CD8-positive, alpha-beta memory T cell (primary cell): ENCODE measurements at regions of chr20 and their contacts with region 1.

Region 1: GRCh38 chr20:2713285-2713684 is 20.7 kb downstream of the EBF4 start:
- DNase-seq: peak in 2 of 5 donors; percentile 42 to 52
- H3K4me3 ChIP-seq: no peak overlapping the region
- H3K4me3 Mint-ChIP-seq: no peak overlapping the region
- H3K27ac ChIP-seq: no peak overlapping the region
- H3K27ac Mint-ChIP-seq: no peak overlapping the region
- H3K4me1 ChIP-seq: peaks cover 5% of the 10 kb centered on the region
- H3K4me1 Mint-ChIP-seq: peaks cover 0 to 2% (median 0%) of the 10 kb centered on the region in 3 donors
- H3K27me3 ChIP-seq: no peaks in the 10 kb centered on the region
- H3K27me3 Mint-ChIP-seq: peaks cover 4 to 8% of the 10 kb centered on the region in 2 donors

Region 2: DNA sequence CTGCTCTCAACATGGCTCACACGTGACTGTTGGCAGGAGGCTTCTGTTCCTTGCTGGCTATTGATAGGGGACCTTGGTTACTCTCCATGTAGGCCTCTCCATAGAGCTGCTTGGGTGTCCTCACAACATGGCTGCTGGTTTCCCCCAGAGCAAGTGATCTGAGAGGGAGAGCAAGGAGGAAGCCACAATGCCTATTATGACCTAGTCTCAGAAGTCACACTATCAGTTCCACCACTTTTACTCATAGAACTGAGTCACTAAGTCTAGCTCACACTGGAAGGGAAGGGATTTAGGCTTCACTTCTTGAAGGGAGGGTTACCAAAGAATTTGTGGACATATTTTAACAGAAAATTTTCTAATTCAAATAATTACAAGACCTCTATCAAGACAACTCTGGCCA is 69.6 kb before region 1 on chr20:
- CTCF ChIA-PET with region 1: no interaction called
- POLR2A ChIA-PET with region 1: no interaction called
- DNase-seq: no peak
- H3K4me3 ChIP-seq: no peak overlapping the region
- H3K4me3 Mint-ChIP-seq: no peak overlapping the region
- H3K27ac ChIP-seq: no peak overlapping the region
- H3K27ac Mint-ChIP-seq: no peak overlapping the region
- H3K4me1 ChIP-seq: peaks cover 3% of the 10 kb centered on the region
- H3K4me1 Mint-ChIP-seq: peaks cover 5 to 11% (median 6%) of the 10 kb centered on the region in 3 donors
- H3K27me3 ChIP-seq: no peaks in the 10 kb centered on the region
- H3K27me3 Mint-ChIP-seq: no peaks in the 10 kb centered on the region

Region 3: GRCh38 chr20:2729251-2729713 is 16.0 kb after region 1 on chr20:
- CTCF ChIA-PET with region 1: interaction called, 40 read pairs
- POLR2A ChIA-PET with region 1: interaction called, 5 read pairs
- DNase-seq: peak in 3 of 5 donors; percentile 54 to 71 (median 64)
- H3K4me3 ChIP-seq: peak overlapping the region; percentile 4
- H3K4me3 Mint-ChIP-seq: peak overlapping the region in 6 of 7 donors; percentile 51 to 71 (median 65)
- H3K27ac ChIP-seq: no peak overlapping the region
- H3K27ac Mint-ChIP-seq: peak overlapping the region; percentile 16 to 96 (median 90)
- H3K4me1 ChIP-seq: peaks cover 28% of the 10 kb centered on the region
- H3K4me1 Mint-ChIP-seq: peaks cover 21 to 28% (median 28%) of the 10 kb centered on the region in 3 donors
- H3K27me3 ChIP-seq: no peaks in the 10 kb centered on the region
- H3K27me3 Mint-ChIP-seq: peaks cover 3 to 13% of the 10 kb centered on the region in 2 donors

Region 4: GRCh38 chr20:2742934-2743559 is 29.8 kb after region 1 on chr20:
- CTCF ChIA-PET with region 1: interaction called, 154 read pairs
- POLR2A ChIA-PET with region 1: interaction called, 5 read pairs
- DNase-seq: peak; percentile 56 to 81 (median 68)
- H3K4me3 ChIP-seq: no peak overlapping the region
- H3K4me3 Mint-ChIP-seq: peak overlapping the region; percentile 1 to 88 (median 77)
- H3K27ac ChIP-seq: no peak overlapping the region
- H3K27ac Mint-ChIP-seq: peak overlapping the region; percentile 78 to 99 (median 94)
- H3K4me1 ChIP-seq: peaks cover 48% of the 10 kb centered on the region
- H3K4me1 Mint-ChIP-seq: peaks cover 45 to 51% (median 51%) of the 10 kb centered on the region in 3 donors
- H3K27me3 ChIP-seq: no peaks in the 10 kb centered on the region
- H3K27me3 Mint-ChIP-seq: peaks cover 0 to under 1% of the 10 kb centered on the region in 2 donors

Region 5: GRCh38 chr20:2752567-2753460 is 39.5 kb after region 1 on chr20:
- CTCF ChIA-PET with region 1: interaction called, 17 read pairs
- POLR2A ChIA-PET with region 1: no interaction called
- DNase-seq: peak in 4 of 5 donors; percentile 42 to 70 (median 52)
- H3K4me3 ChIP-seq: peak overlapping the region; percentile 63
- H3K4me3 Mint-ChIP-seq: peak overlapping the region; percentile 81 to 91 (median 87)
- H3K27ac ChIP-seq: no peak overlapping the region
- H3K27ac Mint-ChIP-seq: peak overlapping the region in 6 of 8 donors; percentile 12 to 86 (median 73)
- H3K4me1 ChIP-seq: peaks cover 26% of the 10 kb centered on the region
- H3K4me1 Mint-ChIP-seq: peaks cover 31 to 33% (median 32%) of the 10 kb centered on the region in 3 donors
- H3K27me3 ChIP-seq: peaks cover 4% of the 10 kb centered on the region
- H3K27me3 Mint-ChIP-seq: peaks cover 11 to 14% of the 10 kb centered on the region in 2 donors

Region 6: GRCh38 chr20:3313683-3314065 is 600.4 kb after region 1 on chr20:
- CTCF ChIA-PET with region 1: no interaction called
- POLR2A ChIA-PET with region 1: no interaction called
- DNase-seq: no peak
- H3K4me3 ChIP-seq: no peak overlapping the region
- H3K4me3 Mint-ChIP-seq: no peak overlapping the region
- H3K27ac ChIP-seq: no peak overlapping the region
- H3K27ac Mint-ChIP-seq: no peak overlapping the region
- H3K4me1 ChIP-seq: no peaks in the 10 kb centered on the region
- H3K4me1 Mint-ChIP-seq: no peaks in the 10 kb centered on the region
- H3K27me3 ChIP-seq: no peaks in the 10 kb centered on the region
- H3K27me3 Mint-ChIP-seq: no peaks in the 10 kb centered on the region